Dendritic cell treated with granulocyte-macrophage colony-stimulating factor and Interleukin-4, amounts not matched to agents 40 ng/mL and 50 ng/mL, for 4 days (primary cell): ENCODE measurements at regions of chr19 and their contacts with region 1.

Region 1: DNA sequence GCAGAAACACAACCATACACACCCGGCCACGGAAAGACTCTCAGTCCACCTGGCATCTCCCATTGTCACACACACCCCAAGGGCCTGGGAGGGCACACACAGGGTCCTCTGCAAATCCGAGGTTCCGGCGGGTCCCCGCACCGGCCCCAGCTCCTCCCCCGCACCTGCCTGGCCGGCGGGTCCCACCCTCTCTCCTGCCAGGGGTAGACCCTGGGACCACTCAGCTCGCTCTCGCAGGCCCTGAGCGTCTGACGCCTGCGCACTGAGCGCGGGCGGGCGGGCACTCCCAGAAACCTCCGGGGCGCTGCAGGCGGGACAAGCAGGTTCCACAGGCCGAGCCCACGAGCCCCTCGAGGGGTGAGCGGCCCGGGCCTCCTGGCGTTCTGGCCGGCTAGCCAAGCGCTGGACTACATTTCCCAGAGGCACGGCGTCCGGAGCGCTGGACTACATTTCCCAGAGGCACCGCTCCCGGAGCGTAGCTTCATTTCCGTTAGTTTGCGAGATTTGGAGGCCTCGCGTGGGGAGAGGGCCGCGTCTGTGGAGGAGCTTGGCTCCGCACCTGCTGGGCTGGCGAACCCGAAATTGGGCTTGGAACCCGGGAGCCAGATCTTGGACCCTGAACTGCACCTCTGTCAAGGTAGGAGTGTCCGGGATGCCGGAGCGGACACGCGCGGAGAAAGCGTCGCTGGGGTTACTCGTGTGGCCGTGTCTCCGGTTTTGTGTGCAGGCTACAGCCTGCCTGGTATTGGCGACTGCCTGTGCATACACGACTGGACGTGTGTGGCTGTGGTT is at the start of gene ZNF420:
- H3K4me3 Mint-ChIP-seq: peak within 1 kb of the TSS; percentile 85
- H3K27ac Mint-ChIP-seq: peak within 1 kb of the TSS; percentile 84
- H3K4me1 Mint-ChIP-seq: peaks cover 23% of the 10 kb centered on the region
- H3K27me3 Mint-ChIP-seq: no peaks in the 10 kb centered on the region

Region 2: DNA sequence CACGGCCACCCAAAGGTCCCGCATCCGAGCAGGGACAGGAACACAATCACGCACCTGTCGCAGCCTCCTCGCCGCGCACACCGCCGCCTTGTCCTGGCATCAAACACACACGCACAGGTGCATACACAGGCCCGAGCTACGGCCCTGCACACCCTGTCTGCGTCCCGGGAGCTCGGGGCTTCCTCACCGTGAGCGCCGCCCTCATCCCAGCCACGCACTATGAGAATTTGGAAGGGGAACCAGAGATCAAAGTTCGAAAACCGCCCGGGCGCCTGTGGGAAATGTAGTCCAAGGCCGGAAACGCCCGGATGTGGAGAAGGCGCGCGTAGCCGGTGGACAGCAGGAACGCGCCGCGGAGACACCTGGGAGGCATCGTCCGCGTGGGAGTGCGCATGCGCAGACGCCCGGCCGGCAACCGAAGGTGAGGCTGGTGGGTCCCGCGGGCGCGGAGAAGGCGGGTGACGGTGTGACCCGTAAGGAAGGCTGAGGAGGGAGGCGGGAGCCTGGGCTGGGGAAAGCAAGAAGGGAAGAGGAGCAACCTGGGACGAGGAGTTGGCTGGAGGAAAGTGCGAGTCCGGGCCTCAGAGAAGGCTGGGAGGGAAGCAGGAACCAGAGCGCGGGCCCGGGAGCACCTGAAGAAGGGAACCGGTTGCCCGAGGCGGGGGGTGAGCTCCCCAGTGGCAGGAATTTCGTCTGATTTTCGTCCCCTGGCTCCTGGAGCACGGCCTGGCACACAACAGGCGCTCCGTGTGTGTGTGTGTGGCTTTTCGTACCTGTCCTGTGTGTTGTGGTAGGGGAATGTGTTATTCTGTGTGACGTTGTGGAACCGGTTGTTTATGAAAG is 390.7 kb before region 1 on chr19 and contains the start of gene ZNF567:
- intact Hi-C with region 1: loop called (anchors 5 kb)
- H3K4me3 Mint-ChIP-seq: peak within 1 kb of the TSS; percentile 99
- H3K27ac Mint-ChIP-seq: peak within 1 kb of the TSS; percentile 94
- H3K4me1 Mint-ChIP-seq: peaks cover 29% of the 10 kb centered on the region
- H3K27me3 Mint-ChIP-seq: no peaks in the 10 kb centered on the region

Region 3: GRCh38 chr19:36915992-36916830 is 161.9 kb before region 1 on chr19 and contains the starts of genes ZNF568 and ZNF829:
- intact Hi-C with region 1: loop called (anchors 5 kb)
- H3K4me3 Mint-ChIP-seq: peak within 1 kb of the TSS; percentile 84
- H3K27ac Mint-ChIP-seq: peak within 1 kb of the TSS; percentile 94
- H3K4me1 Mint-ChIP-seq: peaks cover 22% of the 10 kb centered on the region
- H3K27me3 Mint-ChIP-seq: no peaks in the 10 kb centered on the region

Region 4: GRCh38 chr19:37217855-37218591 is 139.9 kb after region 1 on chr19 and contains the start of gene ZNF383:
- intact Hi-C with region 1: loop called (anchors 5 kb)
- H3K4me3 Mint-ChIP-seq: peak within 1 kb of the TSS; percentile 96
- H3K27ac Mint-ChIP-seq: peak within 1 kb of the TSS; percentile 99
- H3K4me1 Mint-ChIP-seq: peaks cover 19% of the 10 kb centered on the region
- H3K27me3 Mint-ChIP-seq: no peaks in the 10 kb centered on the region